PC-9 (cell line): ENCODE measurements at regions of chr14 and their contacts with region 1.

Region 1: GRCh38 chr14:64698903-64699302 is 5.3 kb upstream of the PLEKHG3 start:
- DNase-seq: peak in 1 of 2 experiments; percentile 98
- H3K4me3 ChIP-seq: no peak overlapping the region; the same call in 1 of the 2 replicates
- H3K27ac ChIP-seq: no peak overlapping the region
- H3K4me1 ChIP-seq: peaks cover 42% of the 10 kb centered on the region
- H3K27me3 ChIP-seq: no peaks in the 10 kb centered on the region
- CTCF ChIP-seq: no peak

Region 2: DNA sequence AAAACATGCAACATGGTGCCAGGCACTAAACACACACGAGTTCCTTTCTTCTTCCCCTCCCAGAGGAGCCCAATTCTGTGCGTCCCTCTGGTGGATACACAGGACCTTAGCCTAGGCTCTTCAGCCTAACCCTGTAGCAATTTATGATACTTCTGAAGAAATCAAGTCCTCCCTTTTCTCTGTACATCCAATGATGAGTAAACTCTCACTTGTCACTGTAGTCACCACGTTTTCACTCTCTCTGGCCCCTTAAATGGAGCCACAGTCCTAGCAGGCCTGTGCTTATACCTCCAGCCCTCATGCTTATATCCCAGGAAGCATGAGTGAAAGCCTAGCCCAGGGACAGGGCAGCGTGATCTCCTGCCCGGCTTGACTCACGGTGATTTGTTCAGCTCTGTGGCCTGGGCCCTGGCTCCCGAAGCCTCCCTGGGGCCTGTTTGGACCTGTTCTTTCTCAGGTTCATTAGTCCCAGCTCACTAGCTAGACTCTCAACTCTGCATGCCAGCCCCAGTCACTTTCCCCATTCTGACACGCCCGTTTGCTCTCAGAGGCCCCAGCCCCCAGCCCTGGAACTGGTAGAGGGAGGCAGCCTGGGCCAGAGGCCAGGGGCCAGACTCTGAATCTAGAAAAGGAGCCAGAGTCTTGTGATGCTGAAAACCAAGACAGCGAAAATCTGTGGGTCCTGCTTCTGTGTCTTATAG is 18.7 kb before region 1 on chr14:
- CTCF ChIA-PET with region 1: no interaction called
- POLR2A ChIA-PET with region 1: no interaction called
- intact Hi-C with region 1: loop called (anchors 1 kb)
- DNase-seq: peak; percentile 55 to 61
- H3K4me3 ChIP-seq: no peak overlapping the region
- H3K27ac ChIP-seq: no peak overlapping the region
- H3K4me1 ChIP-seq: peaks cover 13% of the 10 kb centered on the region
- H3K27me3 ChIP-seq: no peaks in the 10 kb centered on the region
- CTCF ChIP-seq: no peak

Region 3: DNA sequence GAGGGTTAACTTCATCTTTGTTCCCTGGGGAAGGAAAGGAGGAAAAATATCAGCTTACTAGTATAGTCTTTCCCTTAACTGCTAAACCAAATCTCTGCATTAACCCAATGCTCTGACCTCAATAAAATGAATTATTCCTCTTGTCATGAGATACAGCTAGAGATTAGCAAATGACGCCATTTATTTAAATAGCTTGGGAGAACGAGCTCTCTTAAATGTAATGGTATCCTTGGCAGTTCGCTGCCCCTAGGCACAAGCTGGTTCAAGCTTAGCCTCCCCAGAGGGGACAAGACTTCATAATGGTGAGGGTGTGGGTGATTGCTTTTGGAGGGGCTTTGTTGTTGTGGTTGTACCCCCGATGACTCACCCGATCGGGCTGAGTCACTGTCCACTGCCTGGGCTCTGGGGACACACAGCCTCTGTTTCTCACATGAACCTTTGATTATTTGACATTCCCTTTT is 307.4 kb after region 1 on chr14:
- CTCF ChIA-PET with region 1: no interaction called
- POLR2A ChIA-PET with region 1: no interaction called
- intact Hi-C with region 1: no loop called
- DNase-seq: peak; percentile 40 to 41
- H3K4me3 ChIP-seq: no peak overlapping the region
- H3K27ac ChIP-seq: peak overlapping the region; percentile 44
- H3K4me1 ChIP-seq: peaks cover 27% of the 10 kb centered on the region
- H3K27me3 ChIP-seq: no peaks in the 10 kb centered on the region
- CTCF ChIP-seq: no peak

Region 4: DNA sequence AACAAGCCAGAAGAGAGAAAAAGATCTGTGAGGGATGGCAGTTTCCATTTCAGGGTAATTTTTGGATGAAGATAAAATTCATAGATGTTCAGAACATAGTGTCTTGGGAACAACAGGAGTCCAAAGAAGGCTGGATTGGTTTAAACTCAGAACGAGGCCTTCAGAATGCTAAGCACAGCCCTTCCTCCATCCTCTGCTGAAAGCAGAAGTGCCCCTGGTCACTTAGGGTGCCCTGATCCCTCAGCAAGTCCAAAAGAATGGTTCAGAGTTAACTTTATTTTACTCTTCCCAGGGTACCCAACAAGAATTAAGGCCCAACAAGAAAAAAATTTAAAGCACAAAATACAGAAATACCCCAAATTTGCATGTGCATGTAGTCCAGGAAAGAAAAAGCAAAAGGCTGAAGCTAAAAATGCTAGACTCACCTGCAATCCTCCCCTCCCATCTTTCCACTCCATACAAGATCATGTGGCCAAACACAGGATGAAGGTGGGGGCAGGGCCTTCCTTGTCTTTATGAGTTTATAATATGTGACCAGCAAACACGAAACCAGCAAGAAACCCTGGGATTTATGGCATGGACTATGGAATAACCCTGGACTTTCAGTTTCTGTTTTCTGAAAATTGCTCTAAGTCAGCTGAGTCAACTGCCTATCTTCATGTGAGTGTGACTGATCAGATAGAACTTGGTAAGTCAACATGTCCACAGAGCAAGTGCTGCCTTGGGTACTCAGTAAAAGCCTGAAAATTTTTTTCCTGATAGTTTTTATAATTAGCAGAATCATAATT is 382.3 kb after region 1 on chr14:
- CTCF ChIA-PET with region 1: no interaction called
- POLR2A ChIA-PET with region 1: no interaction called
- intact Hi-C with region 1: no loop called
- DNase-seq: no peak
- H3K4me3 ChIP-seq: no peak overlapping the region
- H3K27ac ChIP-seq: no peak overlapping the region
- H3K4me1 ChIP-seq: no peaks in the 10 kb centered on the region
- H3K27me3 ChIP-seq: no peaks in the 10 kb centered on the region
- CTCF ChIP-seq: no peak